Natural killer cell (primary cell): ENCODE measurements at regions of chr11 and their contacts with region 1.

Region 1: GRCh38 chr11:75388386-75389275 is 10.7 kb upstream of the RPS3 start:
- DNase-seq: peak; percentile 49 to 89
- ATAC-seq: peak; percentile 85 to 91 (median 88)
- H3K4me3 ChIP-seq: no peak overlapping the region
- H3K4me3 Mint-ChIP-seq: no peak overlapping the region
- H3K27ac ChIP-seq: no peak overlapping the region
- H3K27ac Mint-ChIP-seq: no peak overlapping the region
- H3K4me1 ChIP-seq: peaks cover 19% of the 10 kb centered on the region
- H3K4me1 Mint-ChIP-seq: peaks cover 11 to 12% of the 10 kb centered on the region in 2 donors
- H3K27me3 ChIP-seq: no peaks in the 10 kb centered on the region
- H3K27me3 Mint-ChIP-seq: no peaks in the 10 kb centered on the region
- CTCF ChIP-seq: peak; percentile 85

Region 2: DNA sequence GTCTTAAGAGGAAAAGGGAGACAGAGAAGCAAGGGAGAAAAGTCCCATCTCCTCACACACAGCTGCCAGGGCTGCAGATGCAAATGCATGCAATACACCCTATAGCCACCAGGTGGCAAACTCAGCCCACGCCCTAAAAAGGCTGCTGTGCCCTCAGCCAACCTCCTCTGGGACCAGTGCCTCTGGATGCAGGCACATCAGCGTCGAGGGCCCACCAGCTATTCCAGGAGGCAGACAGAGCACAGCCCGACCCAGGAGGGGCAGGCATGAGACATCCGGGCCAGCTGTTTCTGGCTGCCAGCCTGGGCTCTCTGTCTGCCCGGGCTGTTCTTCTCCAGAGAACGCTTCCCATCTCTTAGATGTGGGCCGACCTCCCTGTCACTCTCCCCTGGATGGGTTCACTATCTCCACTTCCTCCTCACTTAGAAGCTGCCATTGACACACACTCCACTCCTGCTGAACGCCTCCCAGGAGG is 108.4 kb before region 1 on chr11:
- intact Hi-C with region 1: loop called (anchors 1 kb)
- DNase-seq: peak; percentile 73 to 89
- ATAC-seq: peak; percentile 62 to 74 (median 74)
- H3K4me3 ChIP-seq: no peak overlapping the region
- H3K4me3 Mint-ChIP-seq: no peak overlapping the region
- H3K27ac ChIP-seq: no peak overlapping the region
- H3K27ac Mint-ChIP-seq: peak overlapping the region; percentile 24 to 74
- H3K4me1 ChIP-seq: peaks cover 30% of the 10 kb centered on the region
- H3K4me1 Mint-ChIP-seq: peaks cover 38 to 39% of the 10 kb centered on the region in 2 donors
- H3K27me3 ChIP-seq: no peaks in the 10 kb centered on the region
- H3K27me3 Mint-ChIP-seq: no peaks in the 10 kb centered on the region
- CTCF ChIP-seq: peak; percentile 93

Region 3: DNA sequence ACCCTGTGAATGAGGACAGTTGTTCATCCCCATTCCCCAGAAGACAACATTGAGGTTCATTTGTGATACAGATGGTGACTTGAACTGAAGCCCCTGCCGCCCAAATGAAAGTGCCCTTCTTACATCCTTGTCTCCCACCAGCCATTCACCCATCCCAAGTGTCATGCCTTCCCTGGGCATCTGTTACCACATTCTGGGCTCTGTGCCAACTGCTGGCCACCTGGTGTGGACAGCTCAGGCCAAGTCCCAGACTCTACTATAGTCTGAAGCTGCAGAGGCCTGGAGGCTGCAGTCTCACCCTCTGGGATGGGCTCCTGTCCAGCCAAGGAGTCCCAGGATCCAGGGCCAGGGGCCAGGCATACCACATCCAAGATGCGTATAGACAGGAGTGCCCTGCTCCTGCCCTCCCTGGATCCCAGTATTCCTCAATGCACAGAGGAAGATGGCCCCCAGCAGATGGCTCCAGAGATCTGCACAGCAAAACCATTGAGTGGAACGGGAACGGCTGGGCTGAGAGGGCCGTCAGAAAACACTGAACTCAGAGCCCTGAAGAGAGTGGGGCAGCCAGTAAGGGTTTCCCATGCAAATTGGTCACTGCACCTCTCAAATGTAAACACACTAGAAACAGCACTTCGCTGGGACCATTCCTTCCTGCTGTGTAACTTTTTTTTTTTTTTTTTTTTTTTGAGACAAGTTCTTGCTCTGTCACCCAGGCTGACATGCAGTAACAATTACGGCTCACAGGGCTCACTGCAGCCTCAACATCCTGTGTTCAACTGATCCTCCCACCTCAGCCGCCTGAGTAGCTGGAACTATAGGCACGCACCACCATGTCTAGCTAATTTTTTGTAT is 60.0 kb before region 1 on chr11:
- intact Hi-C with region 1: loop called (anchors 2 kb)
- DNase-seq: peak; percentile 49 to 72
- ATAC-seq: peak; percentile 88 to 90 (median 89)
- H3K4me3 ChIP-seq: no peak overlapping the region
- H3K4me3 Mint-ChIP-seq: peak overlapping the region; percentile 72
- H3K27ac ChIP-seq: peak overlapping the region; percentile 71
- H3K27ac Mint-ChIP-seq: peak overlapping the region; percentile 58 to 90
- H3K4me1 ChIP-seq: peaks cover 46% of the 10 kb centered on the region
- H3K4me1 Mint-ChIP-seq: peaks cover 70 to 81% of the 10 kb centered on the region in 2 donors
- H3K27me3 ChIP-seq: no peaks in the 10 kb centered on the region
- H3K27me3 Mint-ChIP-seq: no peaks in the 10 kb centered on the region
- CTCF ChIP-seq: peak; percentile 23

Region 4: DNA sequence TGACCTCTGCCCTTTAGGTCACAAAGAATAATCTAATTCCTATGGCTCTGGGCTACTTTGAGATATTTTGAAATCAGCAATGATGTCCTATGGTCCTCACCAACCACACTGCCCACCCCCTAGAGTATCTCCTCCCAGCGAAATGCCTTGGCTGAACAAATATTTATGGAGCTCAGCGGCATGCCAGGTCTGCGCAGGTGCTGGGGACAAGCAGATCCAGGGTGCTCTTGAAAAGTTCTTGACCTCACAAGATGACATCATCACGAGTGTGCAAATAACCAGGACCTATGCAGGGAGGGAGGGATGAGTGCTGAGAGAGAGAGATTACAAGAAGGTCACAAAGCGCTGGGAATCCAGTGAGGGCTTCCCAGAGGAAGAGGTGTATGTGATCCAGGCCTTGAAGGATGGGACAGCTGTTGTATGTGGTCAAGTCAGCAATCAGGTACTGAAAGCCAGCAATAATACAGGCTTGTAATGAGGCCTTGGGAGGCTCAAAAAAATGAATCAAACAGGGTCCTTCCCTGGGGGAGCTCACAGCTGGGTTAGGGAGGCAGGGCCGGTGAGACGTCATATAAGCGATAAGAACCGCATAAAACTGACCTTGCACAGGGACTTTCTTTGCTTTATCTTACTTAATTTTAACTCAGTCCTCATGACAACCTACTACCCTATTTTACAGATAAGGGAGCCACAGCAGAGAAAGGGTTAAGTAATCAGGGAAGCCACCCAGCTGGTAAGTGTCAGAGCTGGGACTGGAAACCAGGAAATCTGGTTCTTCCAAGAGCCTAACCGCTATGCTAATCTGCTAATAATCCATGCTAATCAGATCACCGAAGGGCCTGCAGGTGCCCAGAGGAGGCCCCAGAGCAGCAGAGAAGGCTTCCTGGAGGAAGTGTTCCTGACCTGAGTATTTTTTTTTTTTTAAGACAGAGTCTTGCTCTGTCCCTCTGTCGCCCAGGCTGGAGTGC is 45.4 kb before region 1 on chr11:
- intact Hi-C with region 1: loop called (anchors 5 kb)
- DNase-seq: no peak
- ATAC-seq: no peak
- H3K4me3 ChIP-seq: no peak overlapping the region
- H3K4me3 Mint-ChIP-seq: peak overlapping the region; percentile 57
- H3K27ac ChIP-seq: no peak overlapping the region
- H3K27ac Mint-ChIP-seq: peak overlapping the region; percentile 92 to 94
- H3K4me1 ChIP-seq: peaks cover 99% of the 10 kb centered on the region
- H3K4me1 Mint-ChIP-seq: peaks cover 84 to 100% of the 10 kb centered on the region in 2 donors
- H3K27me3 ChIP-seq: no peaks in the 10 kb centered on the region
- H3K27me3 Mint-ChIP-seq: no peaks in the 10 kb centered on the region
- CTCF ChIP-seq: no peak

Region 5: DNA sequence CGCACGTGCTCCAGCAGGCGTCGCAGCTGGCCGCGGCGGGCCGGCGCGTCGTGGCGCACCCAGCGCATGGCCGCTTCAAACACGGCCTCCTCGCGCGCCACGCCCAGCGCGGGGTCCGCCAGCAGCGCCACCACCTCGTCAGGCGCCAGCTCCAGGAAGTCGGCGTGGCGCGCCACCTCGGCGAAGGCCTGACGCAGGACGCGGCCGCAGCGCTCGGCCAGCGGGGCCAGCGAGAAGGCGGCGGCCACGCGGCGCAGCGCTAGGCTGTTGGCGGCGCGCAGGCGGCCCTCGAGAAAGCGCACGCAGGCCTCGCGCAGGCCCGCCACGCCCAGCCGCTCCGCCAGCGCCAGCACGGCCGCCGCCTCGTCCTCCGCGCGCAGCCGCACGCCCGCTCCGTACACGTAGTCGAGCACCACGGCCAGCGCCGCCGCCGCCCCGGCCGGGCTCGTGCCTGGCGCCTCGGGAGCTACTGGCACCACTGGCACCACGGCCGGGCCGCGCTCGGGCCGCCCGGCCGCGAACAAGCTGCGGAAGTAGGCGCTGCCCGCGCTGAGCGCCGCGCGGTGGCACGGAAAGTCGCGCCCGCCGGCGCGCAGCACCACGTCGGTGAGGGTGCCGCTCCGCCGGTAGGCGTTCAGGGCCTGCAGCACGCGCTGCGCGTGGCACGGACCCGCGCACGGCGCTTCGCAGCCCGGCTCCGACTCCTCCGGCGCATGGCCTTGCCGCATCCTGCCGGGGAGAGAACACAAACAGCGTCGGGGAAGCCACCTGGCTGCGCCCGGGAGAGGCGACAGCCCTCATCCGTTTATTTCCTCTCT is 41.5 kb after region 1 on chr11:
- intact Hi-C with region 1: loop called (anchors 1 kb)
- DNase-seq: peak; percentile 58 to 81
- ATAC-seq: peak; percentile 68 to 76 (median 70)
- H3K4me3 ChIP-seq: peak overlapping the region; percentile 33
- H3K4me3 Mint-ChIP-seq: peak overlapping the region; percentile 96
- H3K27ac ChIP-seq: no peak overlapping the region
- H3K27ac Mint-ChIP-seq: peak overlapping the region; percentile 76 to 83
- H3K4me1 ChIP-seq: peaks cover 23% of the 10 kb centered on the region
- H3K4me1 Mint-ChIP-seq: peaks cover 18 to 29% of the 10 kb centered on the region in 2 donors
- H3K27me3 ChIP-seq: peaks cover 32% of the 10 kb centered on the region
- H3K27me3 Mint-ChIP-seq: peaks cover 24 to 40% of the 10 kb centered on the region in 2 donors
- CTCF ChIP-seq: no peak

Region 6: GRCh38 chr11:75532200-75533048 is 143.8 kb after region 1 on chr11:
- intact Hi-C with region 1: loop called (anchors 1 kb)
- DNase-seq: peak; percentile 77 to 90
- ATAC-seq: peak; percentile 43 to 67 (median 52)
- H3K4me3 ChIP-seq: no peak overlapping the region
- H3K4me3 Mint-ChIP-seq: no peak overlapping the region
- H3K27ac ChIP-seq: no peak overlapping the region
- H3K27ac Mint-ChIP-seq: no peak overlapping the region
- H3K4me1 ChIP-seq: peaks cover 39% of the 10 kb centered on the region
- H3K4me1 Mint-ChIP-seq: peaks cover 37 to 66% of the 10 kb centered on the region in 2 donors
- H3K27me3 ChIP-seq: no peaks in the 10 kb centered on the region
- H3K27me3 Mint-ChIP-seq: peaks cover 13 to 18% of the 10 kb centered on the region in 2 donors
- CTCF ChIP-seq: peak; percentile 97